Activated CD4-positive, alpha-beta memory T cell treated with anti-CD3 and anti-CD28 coated beads for 36 hours (primary cell): ENCODE measurements at regions of chr14 and their contacts with region 1.

Region 1: GRCh38 chr14:35292051-35292769 is at the start of gene PSMA6:
- DNase-seq: peak; percentile 100
- H3K4me3 Mint-ChIP-seq: peak within 1 kb of the TSS; percentile 99
- H3K27ac Mint-ChIP-seq: peak within 1 kb of the TSS; percentile 97
- H3K4me1 Mint-ChIP-seq: peaks cover 50% of the 10 kb centered on the region
- H3K27me3 Mint-ChIP-seq: no peaks in the 10 kb centered on the region
- total RNA-seq, gene PSMA6: 407 to 425 TPM

Region 2: GRCh38 chr14:34237081-34237480 is 1055.1 kb before region 1 on chr14:
- CTCF ChIA-PET with region 1: no interaction called
- POLR2A ChIA-PET with region 1: no interaction called
- intact Hi-C with region 1: no loop called
- DNase-seq: no peak
- H3K4me3 Mint-ChIP-seq: no peak overlapping the region
- H3K27ac Mint-ChIP-seq: no peak overlapping the region
- H3K4me1 Mint-ChIP-seq: no peaks in the 10 kb centered on the region
- H3K27me3 Mint-ChIP-seq: no peaks in the 10 kb centered on the region

Region 3: GRCh38 chr14:34982417-34983147 is 309.6 kb before region 1 on chr14 and contains the start of gene SRP54:
- CTCF ChIA-PET with region 1: interaction called, 3 read pairs
- POLR2A ChIA-PET with region 1: interaction called, 5 read pairs
- intact Hi-C with region 1: loop called (anchors 2 kb)
- DNase-seq: peak; percentile 100
- H3K4me3 Mint-ChIP-seq: no peak within 1 kb of the TSS
- H3K27ac Mint-ChIP-seq: no peak within 1 kb of the TSS
- H3K4me1 Mint-ChIP-seq: peaks cover 23% of the 10 kb centered on the region
- H3K27me3 Mint-ChIP-seq: no peaks in the 10 kb centered on the region
- total RNA-seq, gene SRP54: 82.6 to 87.7 TPM

Region 4: DNA sequence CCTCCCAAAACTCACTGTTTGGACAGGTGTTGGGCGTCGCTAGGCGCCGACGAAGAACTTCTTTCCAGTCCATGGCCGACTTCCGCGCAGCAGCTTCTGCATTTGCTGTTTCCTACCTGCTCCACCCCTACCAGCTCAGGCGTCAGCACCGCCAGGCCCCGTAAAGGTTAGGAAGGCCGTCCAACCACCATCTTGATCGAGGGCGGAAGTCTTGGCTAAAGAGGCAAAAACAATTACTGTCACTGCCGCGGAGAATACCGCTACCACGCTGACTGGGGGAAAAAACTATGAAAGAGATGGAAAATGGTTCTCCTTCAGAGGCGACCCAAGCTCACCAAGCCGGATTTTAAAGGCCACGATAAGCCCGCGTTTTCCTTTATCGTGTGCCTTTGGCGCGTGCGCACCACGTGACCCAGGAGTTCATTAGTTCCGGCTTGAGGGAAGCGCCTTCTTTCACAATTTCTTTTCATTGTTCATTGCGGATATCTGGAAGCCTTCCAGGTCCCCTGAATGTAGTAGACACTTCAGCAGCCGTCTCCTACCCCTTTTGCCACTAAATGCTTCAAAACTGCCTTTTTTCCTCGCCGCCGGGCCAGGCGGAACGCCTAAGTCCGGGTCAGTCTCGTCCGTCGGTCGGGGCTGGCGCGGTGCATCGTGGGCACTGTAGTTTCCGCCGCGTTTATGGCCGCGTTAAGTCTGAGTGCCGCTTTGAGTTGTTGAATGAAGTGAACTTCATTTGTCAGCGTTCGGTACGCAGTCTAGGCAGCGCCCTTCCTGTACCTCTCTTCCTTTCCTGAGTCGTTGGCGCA is 170.1 kb before region 1 on chr14 and contains the starts of genes PPP2R3C and PRORP:
- CTCF ChIA-PET with region 1: interaction called, 6 read pairs
- POLR2A ChIA-PET with region 1: interaction called, 6 read pairs
- intact Hi-C with region 1: loop called (anchors 1 kb)
- DNase-seq: peak; percentile 93
- H3K4me3 Mint-ChIP-seq: peak within 1 kb of the TSS; percentile 82
- H3K27ac Mint-ChIP-seq: peak within 1 kb of the TSS; percentile 99
- H3K4me1 Mint-ChIP-seq: peaks cover 55% of the 10 kb centered on the region
- H3K27me3 Mint-ChIP-seq: no peaks in the 10 kb centered on the region
- total RNA-seq, gene PPP2R3C: 48.9 to 51.8 TPM
- total RNA-seq, gene PRORP: 43.4 to 44.6 TPM

Region 5: GRCh38 chr14:35189422-35189821 is 102.8 kb before region 1 on chr14:
- CTCF ChIA-PET with region 1: no interaction called
- POLR2A ChIA-PET with region 1: no interaction called
- intact Hi-C with region 1: no loop called
- DNase-seq: no peak
- H3K4me3 Mint-ChIP-seq: no peak overlapping the region
- H3K27ac Mint-ChIP-seq: no peak overlapping the region
- H3K4me1 Mint-ChIP-seq: peaks cover 9% of the 10 kb centered on the region
- H3K27me3 Mint-ChIP-seq: no peaks in the 10 kb centered on the region

Region 6: GRCh38 chr14:35268946-35269345 is 23.3 kb before region 1 on chr14:
- CTCF ChIA-PET with region 1: no interaction called
- POLR2A ChIA-PET with region 1: no interaction called
- intact Hi-C with region 1: no loop called
- DNase-seq: no peak
- H3K4me3 Mint-ChIP-seq: no peak overlapping the region
- H3K27ac Mint-ChIP-seq: no peak overlapping the region
- H3K4me1 Mint-ChIP-seq: no peaks in the 10 kb centered on the region
- H3K27me3 Mint-ChIP-seq: no peaks in the 10 kb centered on the region

Region 7: DNA sequence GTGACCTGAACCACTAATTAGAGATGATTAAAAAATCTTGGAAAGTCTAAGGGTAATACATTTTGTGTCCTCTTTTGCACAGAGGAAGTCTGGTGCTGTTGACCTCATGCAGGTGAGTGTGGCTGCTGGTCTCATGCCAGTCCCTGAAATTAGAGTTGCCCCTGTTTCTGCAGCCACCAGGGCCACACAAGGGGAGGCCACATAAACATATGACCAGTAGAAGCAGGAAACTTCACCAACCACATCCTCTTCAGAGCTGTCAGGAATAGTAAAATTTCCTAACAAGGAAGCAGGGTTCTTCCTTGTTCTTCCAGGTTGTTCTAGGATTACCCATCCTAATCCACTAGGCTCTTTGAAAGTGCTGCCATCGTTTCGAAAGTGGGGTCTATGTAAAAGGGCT is 28.3 kb after region 1 on chr14:
- CTCF ChIA-PET with region 1: interaction called, 9 read pairs
- POLR2A ChIA-PET with region 1: interaction called, 40 read pairs
- intact Hi-C with region 1: loop called (anchors 1 kb)
- DNase-seq: no peak
- H3K4me3 Mint-ChIP-seq: no peak overlapping the region
- H3K27ac Mint-ChIP-seq: no peak overlapping the region
- H3K4me1 Mint-ChIP-seq: no peaks in the 10 kb centered on the region
- H3K27me3 Mint-ChIP-seq: no peaks in the 10 kb centered on the region

Region 8: GRCh38 chr14:35355981-35356841 is 64.0 kb after region 1 on chr14:
- CTCF ChIA-PET with region 1: interaction called, 3 read pairs
- POLR2A ChIA-PET with region 1: interaction called, 16 read pairs
- intact Hi-C with region 1: loop called (anchors 1 kb)
- DNase-seq: peak; percentile 76
- H3K4me3 Mint-ChIP-seq: peak overlapping the region; percentile 17
- H3K27ac Mint-ChIP-seq: peak overlapping the region; percentile 79
- H3K4me1 Mint-ChIP-seq: peaks cover 40% of the 10 kb centered on the region
- H3K27me3 Mint-ChIP-seq: no peaks in the 10 kb centered on the region

Region 9: GRCh38 chr14:35492569-35493014 is 200.4 kb after region 1 on chr14:
- CTCF ChIA-PET with region 1: no interaction called
- POLR2A ChIA-PET with region 1: no interaction called
- intact Hi-C with region 1: no loop called
- DNase-seq: no peak
- H3K4me3 Mint-ChIP-seq: no peak overlapping the region
- H3K27ac Mint-ChIP-seq: no peak overlapping the region
- H3K4me1 Mint-ChIP-seq: no peaks in the 10 kb centered on the region
- H3K27me3 Mint-ChIP-seq: peaks cover 14% of the 10 kb centered on the region